ENCODE measurements at regions of chr3 and their contacts with region 1.

Region 1: DNA sequence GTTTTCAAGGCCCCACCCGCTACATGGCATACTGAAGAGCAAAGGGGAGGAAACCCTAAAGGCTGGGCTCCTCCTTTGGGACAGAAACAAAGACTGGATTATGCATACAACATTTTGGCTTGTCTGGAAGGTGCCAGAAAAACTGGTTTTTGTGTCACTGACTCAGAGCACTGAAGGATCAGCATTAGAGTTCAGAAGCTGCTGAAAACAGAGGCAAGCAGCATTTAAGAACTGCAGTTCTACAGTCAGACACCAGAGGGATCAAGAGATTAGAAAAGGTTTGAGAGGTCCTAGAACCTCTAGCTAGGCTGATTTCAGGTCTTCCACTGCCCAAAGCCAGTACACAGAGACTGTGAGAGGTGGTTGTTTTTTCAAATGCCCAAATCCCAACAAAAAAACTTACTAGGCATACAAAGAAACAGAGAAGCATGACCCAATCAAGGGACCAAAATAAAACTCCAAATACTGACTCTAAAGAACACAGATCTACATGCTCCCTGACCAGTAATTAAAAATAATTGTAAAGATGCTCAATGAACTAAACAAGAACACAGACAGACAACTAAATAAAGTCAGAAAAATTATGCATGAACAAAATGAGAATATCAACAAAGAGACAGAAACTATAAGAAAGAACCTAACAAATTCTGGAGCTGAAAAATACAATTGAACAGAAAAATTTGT is 91.2 kb downstream of the SENP2 start:
- DNase-seq: peak in 2 of 7 donors; percentile 30 to 32
- H3K4me3 ChIP-seq: no peak overlapping the region
- H3K27ac ChIP-seq: no peak overlapping the region
- H3K4me1 ChIP-seq: no peaks in the 10 kb centered on the region
- H3K27me3 ChIP-seq: no peaks in the 10 kb centered on the region
- CTCF ChIP-seq: peak; percentile 43 to 71 (median 60)
- POLR2A ChIP-seq: no peak

Region 2: DNA sequence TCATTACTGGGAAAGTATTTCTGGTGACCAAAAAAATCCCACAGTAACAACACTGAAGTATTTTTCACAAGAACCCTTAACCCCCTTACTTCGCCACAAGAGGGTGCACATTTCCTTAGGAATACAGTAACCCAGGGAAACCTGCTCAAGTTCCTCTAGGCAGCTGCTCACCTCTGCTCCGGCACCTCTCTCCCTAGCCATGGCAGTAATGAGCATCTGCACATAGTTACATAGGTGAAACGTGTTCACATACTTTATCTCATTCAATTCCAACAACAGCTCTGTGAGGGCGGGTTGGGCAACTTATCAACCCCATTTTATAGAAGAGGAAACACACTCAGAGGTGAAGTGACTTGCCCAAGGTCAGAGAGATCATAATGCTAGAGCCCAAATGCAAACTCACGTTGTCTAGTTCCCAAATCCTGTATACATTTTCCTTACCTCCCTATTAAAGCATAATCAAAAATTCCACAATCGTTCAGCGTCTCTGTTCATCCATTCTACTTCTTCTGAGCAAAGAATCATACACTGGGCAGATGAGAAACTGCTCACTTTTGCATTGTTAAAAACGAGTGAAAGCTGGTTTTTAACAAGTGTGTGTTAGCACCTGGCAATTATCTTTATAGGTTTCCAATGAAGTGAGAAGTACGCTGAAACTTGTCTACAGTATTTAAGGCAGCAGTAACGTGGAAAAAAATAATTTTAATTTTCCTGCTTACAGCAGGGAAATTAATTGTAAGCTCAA is 56.9 kb after region 1 on chr3:
- intact Hi-C with region 1: loop called in 1 of 2 experiments (anchors 10 kb)
- DNase-seq: peak; percentile 58 to 81 (median 75)
- H3K4me3 ChIP-seq: peak overlapping the region in 1 of 4 donors; percentile 24
- H3K27ac ChIP-seq: peak overlapping the region in 2 of 5 donors; percentile 23 to 41
- H3K4me1 ChIP-seq: peaks cover 18 to 55% of the 10 kb centered on the region in 2 donors
- H3K27me3 ChIP-seq: no peaks in the 10 kb centered on the region
- CTCF ChIP-seq: peak; percentile 41 to 72 (median 66)
- POLR2A ChIP-seq: no peak

Region 3: DNA sequence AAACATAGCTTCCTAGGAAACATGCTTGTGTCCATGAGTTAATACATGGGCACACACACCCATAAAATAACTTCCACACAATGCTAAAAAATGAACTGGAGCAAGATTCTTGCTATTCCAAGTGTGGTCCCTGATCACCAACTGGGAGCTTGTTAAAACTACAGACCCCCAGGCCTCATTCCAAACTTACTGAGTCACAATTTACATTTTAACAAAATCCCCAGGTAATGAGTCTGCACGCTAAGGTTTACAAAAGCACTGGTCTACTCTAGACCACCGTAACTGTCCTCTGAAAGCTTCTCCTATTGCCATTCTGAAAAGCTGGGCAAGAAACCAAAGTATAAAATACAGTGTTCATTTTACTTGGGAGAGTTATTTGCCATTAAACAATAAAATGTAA is 102.2 kb after region 1 on chr3:
- intact Hi-C with region 1: loop called in 1 of 2 experiments (anchors 10 kb)
- DNase-seq: no peak
- H3K4me3 ChIP-seq: no peak overlapping the region
- H3K27ac ChIP-seq: no peak overlapping the region
- H3K4me1 ChIP-seq: peaks cover 0 to 8% of the 10 kb centered on the region in 2 donors
- H3K27me3 ChIP-seq: no peaks in the 10 kb centered on the region
- CTCF ChIP-seq: no peak
- POLR2A ChIP-seq: no peak

Region 4: GRCh38 chr3:185820973-185821758 is 143.9 kb after region 1 on chr3:
- intact Hi-C with region 1: no loop called
- DNase-seq: no peak
- H3K4me3 ChIP-seq: no peak overlapping the region
- H3K27ac ChIP-seq: no peak overlapping the region
- H3K4me1 ChIP-seq: peaks cover 0 to 39% of the 10 kb centered on the region in 2 donors
- H3K27me3 ChIP-seq: no peaks in the 10 kb centered on the region
- CTCF ChIP-seq: no peak
- POLR2A ChIP-seq: no peak

Measured in adrenal gland (tissue), 19 donors.